Activated T-helper 2 cell treated with anti-CD3 and anti-CD28 coated beads, Interferon-gamma antibody, Interleukin-2, Interleukin-4, amounts not matched to agents 10 μg/mL and 5 μg/mL and 100 μg/mL, durations not matched to agents 14 hours and 24 hours and 36 hours (primary cell): ENCODE measurements at regions of chr10 and their contacts with region 1.

Region 1: GRCh38 chr10:24642622-24643417 is 80.9 kb downstream of the ARHGAP21 start:
- DNase-seq: no peak
- H3K4me3 Mint-ChIP-seq: no peak overlapping the region
- H3K27ac Mint-ChIP-seq: no peak overlapping the region
- H3K4me1 Mint-ChIP-seq: peaks cover 6% of the 10 kb centered on the region
- H3K27me3 Mint-ChIP-seq: no peaks in the 10 kb centered on the region

Region 2: GRCh38 chr10:24706479-24707118 is 63.8 kb after region 1 on chr10:
- intact Hi-C with region 1: loop called (anchors 5 kb)
- DNase-seq: no peak
- H3K4me3 Mint-ChIP-seq: no peak overlapping the region
- H3K27ac Mint-ChIP-seq: no peak overlapping the region
- H3K4me1 Mint-ChIP-seq: peaks cover 13% of the 10 kb centered on the region
- H3K27me3 Mint-ChIP-seq: no peaks in the 10 kb centered on the region

Region 3: DNA sequence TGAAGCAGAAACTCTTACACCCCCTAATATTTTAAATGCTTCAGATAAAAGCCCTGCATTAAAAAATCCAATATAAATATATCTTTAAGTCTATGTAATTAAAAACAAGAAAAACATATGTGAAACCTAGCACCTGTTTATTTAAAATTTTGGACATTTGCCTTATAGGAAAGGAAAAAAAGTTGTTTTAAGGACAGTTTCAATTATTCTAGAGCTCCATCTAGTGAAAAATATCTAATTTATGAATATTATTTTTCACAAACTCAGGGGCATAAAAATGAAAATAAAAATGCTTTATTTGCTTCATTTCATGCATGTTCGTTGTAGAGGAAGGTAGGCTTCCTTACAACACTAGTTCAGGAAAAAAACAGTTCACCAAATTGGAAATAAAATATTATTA is 347.0 kb after region 1 on chr10:
- intact Hi-C with region 1: loop called (anchors 1 kb)
- DNase-seq: no peak
- H3K4me3 Mint-ChIP-seq: no peak overlapping the region
- H3K27ac Mint-ChIP-seq: no peak overlapping the region
- H3K4me1 Mint-ChIP-seq: no peaks in the 10 kb centered on the region
- H3K27me3 Mint-ChIP-seq: peaks cover 6% of the 10 kb centered on the region

Region 4: GRCh38 chr10:25080880-25081581 is 438.2 kb after region 1 on chr10:
- intact Hi-C with region 1: loop called (anchors 1 kb)
- DNase-seq: peak; percentile 32
- H3K4me3 Mint-ChIP-seq: no peak overlapping the region
- H3K27ac Mint-ChIP-seq: no peak overlapping the region
- H3K4me1 Mint-ChIP-seq: peaks cover 6% of the 10 kb centered on the region
- H3K27me3 Mint-ChIP-seq: peaks cover 13% of the 10 kb centered on the region